Activated T-helper 2 cell treated with anti-CD3 and anti-CD28 coated beads, Interferon-gamma antibody, Interleukin-2, Interleukin-4, amounts not matched to agents 10 μg/mL and 5 μg/mL and 100 μg/mL, durations not matched to agents 14 hours and 24 hours and 36 hours (primary cell): ENCODE measurements at regions of chr2 and their contacts with region 1.

Region 1: DNA sequence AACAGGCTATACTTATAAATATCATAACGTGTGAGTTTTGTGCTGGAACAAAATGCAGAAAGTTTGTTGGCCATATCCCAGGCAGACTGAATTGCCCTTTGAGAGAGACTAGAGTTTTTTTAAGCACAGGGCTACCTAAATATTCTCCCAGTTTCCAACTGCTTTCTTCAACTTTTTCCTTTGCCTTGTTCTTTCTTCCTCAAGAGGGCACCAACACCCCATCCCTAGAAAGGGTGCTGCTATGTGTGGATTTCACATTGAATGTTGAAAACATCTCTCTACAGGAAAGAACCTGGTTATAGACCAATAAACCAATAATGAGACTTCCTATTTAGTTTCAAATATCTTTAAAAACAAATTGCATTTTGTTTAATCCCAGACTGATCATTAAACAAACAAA is 87.9 kb downstream of the ICOS start:
- DNase-seq: no peak
- H3K4me3 Mint-ChIP-seq: no peak overlapping the region
- H3K27ac Mint-ChIP-seq: no peak overlapping the region
- H3K4me1 Mint-ChIP-seq: peaks cover 49% of the 10 kb centered on the region
- H3K27me3 Mint-ChIP-seq: peaks cover 1% of the 10 kb centered on the region

Region 2: GRCh38 chr2:203934041-203934492 is 90.4 kb before region 1 on chr2:
- intact Hi-C with region 1: loop called (anchors 1 kb)
- DNase-seq: peak; percentile 59
- H3K4me3 Mint-ChIP-seq: peak overlapping the region; percentile 61
- H3K27ac Mint-ChIP-seq: peak overlapping the region; percentile 87
- H3K4me1 Mint-ChIP-seq: peaks cover 44% of the 10 kb centered on the region
- H3K27me3 Mint-ChIP-seq: no peaks in the 10 kb centered on the region

Region 3: GRCh38 chr2:203972066-203972465 is 52.4 kb before region 1 on chr2:
- intact Hi-C with region 1: loop called (anchors 1 kb)
- DNase-seq: no peak
- H3K4me3 Mint-ChIP-seq: no peak overlapping the region
- H3K27ac Mint-ChIP-seq: no peak overlapping the region
- H3K4me1 Mint-ChIP-seq: peaks cover 15% of the 10 kb centered on the region
- H3K27me3 Mint-ChIP-seq: peaks cover 26% of the 10 kb centered on the region

Region 4: DNA sequence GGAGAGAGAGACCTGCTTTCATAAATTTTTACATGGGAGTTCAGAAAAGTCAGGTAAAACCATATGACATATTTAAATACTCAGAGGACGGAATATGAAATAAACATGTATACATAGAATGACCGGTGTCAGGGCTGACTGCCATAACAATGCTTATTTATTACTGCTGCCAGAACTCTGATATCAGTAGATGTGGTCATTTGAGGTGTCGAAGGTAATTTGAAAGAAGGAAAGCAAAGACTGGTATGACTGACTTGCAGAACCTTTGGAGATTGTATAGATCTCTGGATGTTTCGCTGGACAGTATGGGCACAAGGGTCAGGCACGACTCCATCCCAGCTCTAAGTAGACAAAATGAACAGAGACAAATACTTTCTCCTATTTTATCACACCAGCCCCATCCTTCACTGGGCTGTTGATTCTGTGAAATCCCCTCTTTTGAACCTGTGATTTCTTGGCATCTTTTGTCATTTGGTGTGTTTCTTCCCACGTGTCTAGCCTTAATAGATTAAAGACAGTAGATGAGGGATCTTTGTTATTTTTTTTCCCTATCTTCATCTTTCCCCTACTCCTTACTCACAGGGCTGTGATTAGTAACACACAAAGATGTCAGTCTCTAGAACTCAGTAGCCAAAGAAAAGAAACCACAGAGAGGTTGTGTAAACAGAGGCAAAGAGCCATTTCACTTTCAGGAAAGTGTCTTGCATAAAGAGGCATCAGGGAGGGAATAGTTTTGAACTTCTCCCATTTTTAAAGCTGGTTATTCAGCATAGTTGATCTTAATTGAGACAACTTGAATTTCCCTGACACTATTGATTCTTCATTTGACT is 26.3 kb before region 1 on chr2:
- intact Hi-C with region 1: loop called (anchors 1 kb)
- DNase-seq: no peak
- H3K4me3 Mint-ChIP-seq: peak overlapping the region; percentile 24
- H3K27ac Mint-ChIP-seq: peak overlapping the region; percentile 77
- H3K4me1 Mint-ChIP-seq: peaks cover 64% of the 10 kb centered on the region
- H3K27me3 Mint-ChIP-seq: no peaks in the 10 kb centered on the region

Region 5: GRCh38 chr2:204177977-204178540 is 153.6 kb after region 1 on chr2:
- intact Hi-C with region 1: loop called (anchors 2 kb)
- DNase-seq: peak; percentile 55
- H3K4me3 Mint-ChIP-seq: no peak overlapping the region
- H3K27ac Mint-ChIP-seq: no peak overlapping the region
- H3K4me1 Mint-ChIP-seq: peaks cover 9% of the 10 kb centered on the region
- H3K27me3 Mint-ChIP-seq: peaks cover 42% of the 10 kb centered on the region

Region 6: GRCh38 chr2:204191574-204192335 is 167.3 kb after region 1 on chr2:
- intact Hi-C with region 1: no loop called
- DNase-seq: no peak
- H3K4me3 Mint-ChIP-seq: no peak overlapping the region
- H3K27ac Mint-ChIP-seq: no peak overlapping the region
- H3K4me1 Mint-ChIP-seq: peaks cover 10% of the 10 kb centered on the region
- H3K27me3 Mint-ChIP-seq: peaks cover 31% of the 10 kb centered on the region

Region 7: GRCh38 chr2:204452464-204453023 is 428.0 kb after region 1 on chr2:
- intact Hi-C with region 1: no loop called
- DNase-seq: no peak
- H3K4me3 Mint-ChIP-seq: no peak overlapping the region
- H3K27ac Mint-ChIP-seq: no peak overlapping the region
- H3K4me1 Mint-ChIP-seq: no peaks in the 10 kb centered on the region
- H3K27me3 Mint-ChIP-seq: peaks cover 10% of the 10 kb centered on the region